ENCODE measurements at regions of chr15 and their contacts with region 1.

Region 1: DNA sequence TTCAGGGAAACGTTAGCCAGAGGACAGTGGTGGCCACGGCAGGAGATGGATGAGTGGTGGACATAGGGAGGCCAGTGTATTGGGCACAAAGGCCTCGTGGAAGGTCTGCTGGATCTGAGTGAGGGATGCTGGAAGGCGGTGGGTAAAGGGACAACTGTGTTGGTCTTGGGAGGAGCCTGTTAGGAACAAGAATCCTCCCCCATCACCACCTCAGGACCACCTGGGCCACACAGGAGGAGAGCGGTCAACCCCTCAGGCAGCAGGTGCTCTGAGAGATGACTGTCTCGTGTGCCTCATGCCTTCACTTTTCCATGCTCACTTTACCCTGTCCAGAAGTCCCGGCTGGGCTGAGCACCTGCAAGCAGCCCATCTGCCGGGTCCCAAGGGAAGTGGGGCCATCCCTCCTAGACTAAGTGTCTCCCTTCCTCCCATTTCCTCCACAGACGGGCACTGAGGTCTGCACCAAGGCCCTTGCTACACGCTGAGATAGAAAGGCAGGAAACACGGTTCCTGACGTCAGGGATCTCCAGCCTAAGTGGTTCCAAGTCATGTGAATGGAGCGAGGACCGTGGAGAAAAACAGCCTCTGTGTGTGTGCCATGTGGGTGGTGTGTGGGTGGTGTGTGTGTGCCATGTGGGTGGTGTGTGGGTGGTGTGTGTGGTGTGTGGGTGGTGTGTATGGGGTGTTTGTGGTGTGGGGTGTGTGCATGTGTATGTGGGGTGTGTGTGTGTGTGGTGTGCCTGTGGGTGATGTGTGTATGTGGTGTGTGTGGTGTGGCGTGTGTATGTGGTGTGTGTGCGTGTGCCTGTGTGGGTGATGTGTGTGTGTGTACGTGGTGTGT is 47.8 kb upstream of the CTSH start:
- DNase-seq: no peak
- ATAC-seq: no peak
- H3K4me3 Mint-ChIP-seq: no peak overlapping the region
- H3K27ac Mint-ChIP-seq: no peak overlapping the region
- H3K4me1 Mint-ChIP-seq: peaks cover 15% of the 10 kb centered on the region
- H3K27me3 Mint-ChIP-seq: peaks cover 21% of the 10 kb centered on the region

Region 2: DNA sequence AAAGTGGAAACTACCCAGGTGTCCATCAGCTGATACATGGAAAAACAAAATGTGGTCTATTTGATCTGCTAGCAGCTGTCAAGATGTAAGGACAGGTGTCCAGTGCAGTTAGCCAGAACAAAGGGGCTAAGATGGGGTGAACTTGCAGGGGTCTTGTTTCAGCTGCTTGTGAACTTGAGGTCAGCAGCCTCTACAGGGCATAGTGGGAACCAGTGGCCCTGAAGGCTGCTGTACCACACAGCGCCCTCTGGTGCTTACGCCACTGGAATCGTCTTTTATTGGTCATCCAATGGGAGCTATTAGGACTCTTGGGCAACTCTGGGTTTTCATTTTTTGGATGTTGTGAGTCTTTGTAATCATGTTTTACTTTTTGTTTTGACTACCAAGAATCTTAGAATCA is 14.4 kb after region 1 on chr15:
- CTCF ChIA-PET with region 1: interaction called, 17 read pairs
- DNase-seq: peak; percentile 77
- ATAC-seq: peak; percentile 71
- H3K4me3 Mint-ChIP-seq: no peak overlapping the region
- H3K27ac Mint-ChIP-seq: no peak overlapping the region
- H3K4me1 Mint-ChIP-seq: peaks cover 13% of the 10 kb centered on the region
- H3K27me3 Mint-ChIP-seq: peaks cover 6% of the 10 kb centered on the region